Activated T-helper 1 cell treated with anti-CD3 and anti-CD28 coated beads, Interleukin-12 subunit alpha, Interleukin-12 subunit beta, Interleukin-2, Interleukin-4 antibody, amounts not matched to agents 30 ng/mL and 10 ng/mL and 1 ng/mL, durations not matched to agents 14 hours and 24 hours and 36 hours (primary cell): ENCODE measurements at regions of chr7 and their contacts with region 1.

Region 1: GRCh38 chr7:134701272-134701671 is 54.6 kb downstream of the BPGM start:
- DNase-seq: no peak
- H3K4me3 Mint-ChIP-seq: no peak overlapping the region
- H3K27ac Mint-ChIP-seq: no peak overlapping the region
- H3K4me1 Mint-ChIP-seq: no peaks in the 10 kb centered on the region
- H3K27me3 Mint-ChIP-seq: peaks cover 2% of the 10 kb centered on the region

Region 2: DNA sequence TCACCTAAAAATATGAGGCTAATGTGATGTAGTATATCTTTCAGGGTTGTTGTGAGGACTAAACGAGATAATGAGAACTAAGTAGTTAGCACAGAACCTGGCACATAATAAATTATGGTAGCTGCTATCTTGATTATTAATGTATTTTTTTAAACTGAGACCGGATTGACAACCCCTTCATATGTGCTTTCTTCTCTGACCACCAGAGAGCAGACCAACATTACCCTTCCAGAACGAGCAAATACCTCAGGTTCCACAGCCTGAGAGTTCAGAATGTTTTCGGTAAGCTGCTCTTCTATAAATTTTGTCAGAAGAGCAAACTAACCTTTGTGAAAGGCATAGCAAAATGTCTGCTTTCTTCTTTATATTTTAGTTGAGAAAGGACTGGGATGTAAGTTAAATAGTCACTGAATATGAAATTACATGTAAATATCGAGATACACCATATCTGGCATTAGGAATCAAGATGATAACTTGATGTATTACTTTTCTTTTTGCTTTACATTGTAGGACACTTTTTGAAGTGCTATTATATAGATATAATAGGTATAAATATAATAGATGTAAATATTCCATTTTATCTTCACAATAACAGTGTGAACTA is 68.2 kb before region 1 on chr7:
- intact Hi-C with region 1: loop called (anchors 1 kb)
- DNase-seq: no peak
- H3K4me3 Mint-ChIP-seq: no peak overlapping the region
- H3K27ac Mint-ChIP-seq: no peak overlapping the region
- H3K4me1 Mint-ChIP-seq: peaks cover 20% of the 10 kb centered on the region
- H3K27me3 Mint-ChIP-seq: peaks cover 5% of the 10 kb centered on the region

Region 3: GRCh38 chr7:134766779-134767519 is 65.7 kb after region 1 on chr7:
- intact Hi-C with region 1: no loop called
- DNase-seq: no peak
- H3K4me3 Mint-ChIP-seq: no peak overlapping the region
- H3K27ac Mint-ChIP-seq: no peak overlapping the region
- H3K4me1 Mint-ChIP-seq: no peaks in the 10 kb centered on the region
- H3K27me3 Mint-ChIP-seq: no peaks in the 10 kb centered on the region